ENCODE measurements at regions of chr1 and their contacts with region 1.

Region 1: GRCh38 chr1:115706587-115707425 is 61.7 kb downstream of the CASQ2 start:
- DNase-seq: peak; percentile 10
- ATAC-seq: peak; percentile 51
- H3K4me3 Mint-ChIP-seq: no peak overlapping the region
- H3K27ac Mint-ChIP-seq: no peak overlapping the region
- H3K4me1 Mint-ChIP-seq: no peaks in the 10 kb centered on the region
- H3K27me3 Mint-ChIP-seq: peaks cover 6% of the 10 kb centered on the region
- CTCF ChIP-seq: peak; percentile 80

Region 2: GRCh38 chr1:115609021-115609420 is 97.8 kb before region 1 on chr1:
- CTCF ChIA-PET with region 1: interaction called, 40 read pairs
- POLR2A ChIA-PET with region 1: no interaction called
- intact Hi-C with region 1: loop called (anchors 10 kb)
- DNase-seq: no peak
- ATAC-seq: no peak
- H3K4me3 Mint-ChIP-seq: no peak overlapping the region
- H3K27ac Mint-ChIP-seq: no peak overlapping the region
- H3K4me1 Mint-ChIP-seq: no peaks in the 10 kb centered on the region
- H3K27me3 Mint-ChIP-seq: peaks cover 1% of the 10 kb centered on the region
- CTCF ChIP-seq: no peak

Region 3: GRCh38 chr1:115642168-115643072 is 64.4 kb before region 1 on chr1:
- CTCF ChIA-PET with region 1: interaction called, 10 read pairs
- POLR2A ChIA-PET with region 1: no interaction called
- intact Hi-C with region 1: no loop called
- DNase-seq: peak; percentile 50
- ATAC-seq: peak; percentile 34
- H3K4me3 Mint-ChIP-seq: peak overlapping the region; percentile 74
- H3K27ac Mint-ChIP-seq: no peak overlapping the region
- H3K4me1 Mint-ChIP-seq: peaks cover 11% of the 10 kb centered on the region
- H3K27me3 Mint-ChIP-seq: peaks cover 28% of the 10 kb centered on the region
- CTCF ChIP-seq: no peak

Region 4: GRCh38 chr1:115648717-115649691 is 57.8 kb before region 1 on chr1:
- CTCF ChIA-PET with region 1: interaction called, 10 read pairs
- POLR2A ChIA-PET with region 1: no interaction called
- intact Hi-C with region 1: no loop called
- DNase-seq: peak; percentile 57
- ATAC-seq: peak; percentile 80
- H3K4me3 Mint-ChIP-seq: no peak overlapping the region
- H3K27ac Mint-ChIP-seq: no peak overlapping the region
- H3K4me1 Mint-ChIP-seq: no peaks in the 10 kb centered on the region
- H3K27me3 Mint-ChIP-seq: peaks cover 7% of the 10 kb centered on the region
- CTCF ChIP-seq: no peak

Region 5: DNA sequence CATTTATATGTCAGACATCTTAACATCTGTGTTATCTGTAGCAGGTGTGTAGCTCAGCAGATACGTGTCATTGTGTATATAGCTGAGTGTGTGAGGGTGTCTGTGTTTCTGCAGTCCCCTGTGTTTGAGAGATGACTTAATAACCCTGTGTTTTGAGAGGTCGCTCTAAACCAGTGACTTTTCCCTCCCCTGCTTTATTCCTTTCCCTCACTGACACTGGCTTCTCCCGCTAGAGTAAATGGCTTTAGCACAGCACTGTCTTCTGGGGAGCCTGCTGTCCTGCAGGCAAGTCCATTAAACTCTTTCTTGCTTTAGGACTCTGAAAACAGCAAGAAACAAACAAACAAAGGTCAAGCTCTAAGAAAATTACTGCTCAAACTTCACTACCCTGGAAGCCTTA is 12.0 kb before region 1 on chr1:
- CTCF ChIA-PET with region 1: interaction called, 35 read pairs
- POLR2A ChIA-PET with region 1: no interaction called
- intact Hi-C with region 1: no loop called
- DNase-seq: no peak
- ATAC-seq: no peak
- H3K4me3 Mint-ChIP-seq: no peak overlapping the region
- H3K27ac Mint-ChIP-seq: no peak overlapping the region
- H3K4me1 Mint-ChIP-seq: no peaks in the 10 kb centered on the region
- H3K27me3 Mint-ChIP-seq: peaks cover 1% of the 10 kb centered on the region
- CTCF ChIP-seq: no peak

Region 6: DNA sequence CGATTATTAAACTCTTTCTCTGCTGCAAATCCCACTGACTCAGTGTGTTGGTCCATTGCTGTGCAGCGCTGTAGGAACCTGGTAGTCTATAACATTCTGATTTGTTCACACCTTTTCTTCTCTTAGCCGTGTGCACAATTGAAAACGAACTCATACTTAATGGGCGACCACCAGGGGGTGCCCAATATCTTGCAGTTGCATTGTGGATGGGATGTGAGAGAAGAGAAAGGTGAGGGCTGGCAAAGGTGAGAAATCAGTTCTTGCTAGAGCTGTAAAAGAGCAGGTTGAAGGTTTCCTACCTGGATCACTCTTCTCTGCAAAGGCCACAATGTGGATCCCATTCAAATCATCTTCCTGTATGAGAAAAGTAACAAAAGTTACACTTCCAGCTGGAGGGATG is 10.7 kb after region 1 on chr1:
- CTCF ChIA-PET with region 1: interaction called, 30 read pairs
- POLR2A ChIA-PET with region 1: no interaction called
- intact Hi-C with region 1: no loop called
- DNase-seq: peak; percentile 65
- ATAC-seq: no peak
- H3K4me3 Mint-ChIP-seq: no peak overlapping the region
- H3K27ac Mint-ChIP-seq: no peak overlapping the region
- H3K4me1 Mint-ChIP-seq: no peaks in the 10 kb centered on the region
- H3K27me3 Mint-ChIP-seq: peaks cover 2% of the 10 kb centered on the region
- CTCF ChIP-seq: peak; percentile 22

Region 7: GRCh38 chr1:115771847-115772457 is 65.1 kb after region 1 on chr1:
- CTCF ChIA-PET with region 1: interaction called, 12 read pairs
- POLR2A ChIA-PET with region 1: no interaction called
- intact Hi-C with region 1: no loop called
- DNase-seq: peak; percentile 6
- ATAC-seq: peak; percentile 27
- H3K4me3 Mint-ChIP-seq: no peak overlapping the region
- H3K27ac Mint-ChIP-seq: no peak overlapping the region
- H3K4me1 Mint-ChIP-seq: no peaks in the 10 kb centered on the region
- H3K27me3 Mint-ChIP-seq: peaks cover 9% of the 10 kb centered on the region
- CTCF ChIP-seq: peak; percentile 50

Region 8: DNA sequence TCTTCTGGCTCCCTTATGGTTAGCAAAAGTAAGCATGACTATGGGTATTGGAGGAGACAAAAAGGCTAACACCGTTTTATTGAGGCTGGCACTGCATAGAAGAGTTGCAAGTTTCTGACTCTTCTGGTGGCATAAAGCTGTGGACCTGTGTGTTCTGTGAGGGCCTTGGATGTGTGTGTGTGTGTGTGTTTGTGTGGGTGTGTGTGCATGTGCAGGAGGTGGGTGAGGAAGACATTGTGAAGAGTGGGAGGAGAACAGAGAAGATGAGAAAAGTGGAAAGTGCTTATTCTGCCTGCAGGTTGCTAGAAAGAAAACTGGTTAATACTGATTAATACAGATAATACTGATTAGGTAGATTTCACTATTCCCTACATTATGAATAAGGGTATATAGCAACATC is 282.1 kb after region 1 on chr1:
- CTCF ChIA-PET with region 1: no interaction called
- POLR2A ChIA-PET with region 1: no interaction called
- intact Hi-C with region 1: no loop called
- DNase-seq: no peak
- ATAC-seq: no peak
- H3K4me3 Mint-ChIP-seq: no peak overlapping the region
- H3K27ac Mint-ChIP-seq: no peak overlapping the region
- H3K4me1 Mint-ChIP-seq: peaks cover 6% of the 10 kb centered on the region
- H3K27me3 Mint-ChIP-seq: peaks cover 1% of the 10 kb centered on the region
- CTCF ChIP-seq: no peak